Cardiac septum (tissue), 1 donor: ENCODE measurements at regions of chr20 and their contacts with region 1.

Region 1: GRCh38 chr20:40251284-40251932 is 437.6 kb downstream of the MAFB start:
- DNase-seq: no peak

Region 2: GRCh38 chr20:39885975-39886649 is 365.3 kb before region 1 on chr20:
- intact Hi-C with region 1: loop called (anchors 10 kb)
- DNase-seq: no peak